Adrenal gland (tissue), 19 donors: ENCODE measurements at regions of chr10 and their contacts with region 1.

Region 1: GRCh38 chr10:78029269-78030226 is at the start of gene POLR3A:
- DNase-seq: peak; percentile 94 to 99 (median 97)
- H3K4me3 ChIP-seq: peak within 1 kb of the TSS; percentile 69 to 95 (median 72)
- H3K27ac ChIP-seq: peak within 1 kb of the TSS; percentile 57 to 88 (median 76)
- H3K4me1 ChIP-seq: peaks cover 9 to 26% of the 10 kb centered on the region in 2 donors
- H3K27me3 ChIP-seq: no peaks in the 10 kb centered on the region
- CTCF ChIP-seq: peak; percentile 46 to 95 (median 70)
- POLR2A ChIP-seq: peak in 1 of 2 donors; percentile 38
- total RNA-seq, gene POLR3A: 9.6 to 18.4 (median 16.1) TPM

Region 2: GRCh38 chr10:77574438-77574837 is 455.1 kb before region 1 on chr10:
- intact Hi-C with region 1: no loop called
- DNase-seq: no peak
- H3K4me3 ChIP-seq: no peak overlapping the region
- H3K27ac ChIP-seq: no peak overlapping the region
- H3K4me1 ChIP-seq: no peaks in the 10 kb centered on the region
- H3K27me3 ChIP-seq: no peaks in the 10 kb centered on the region
- CTCF ChIP-seq: peak in 3 of 6 experiments; percentile 7 to 31 (median 25)
- POLR2A ChIP-seq: no peak

Region 3: GRCh38 chr10:77939561-77940001 is 90.0 kb before region 1 on chr10:
- intact Hi-C with region 1: loop called in 1 of 2 experiments (anchors 10 kb)
- DNase-seq: peak in 6 of 7 donors; percentile 29 to 62 (median 40)
- H3K4me3 ChIP-seq: no peak overlapping the region
- H3K27ac ChIP-seq: no peak overlapping the region
- H3K4me1 ChIP-seq: peaks cover 0 to 10% of the 10 kb centered on the region in 2 donors
- H3K27me3 ChIP-seq: no peaks in the 10 kb centered on the region
- CTCF ChIP-seq: no peak
- POLR2A ChIP-seq: no peak